ENCODE measurements at regions of chr2 and their contacts with region 1.

Region 1: DNA sequence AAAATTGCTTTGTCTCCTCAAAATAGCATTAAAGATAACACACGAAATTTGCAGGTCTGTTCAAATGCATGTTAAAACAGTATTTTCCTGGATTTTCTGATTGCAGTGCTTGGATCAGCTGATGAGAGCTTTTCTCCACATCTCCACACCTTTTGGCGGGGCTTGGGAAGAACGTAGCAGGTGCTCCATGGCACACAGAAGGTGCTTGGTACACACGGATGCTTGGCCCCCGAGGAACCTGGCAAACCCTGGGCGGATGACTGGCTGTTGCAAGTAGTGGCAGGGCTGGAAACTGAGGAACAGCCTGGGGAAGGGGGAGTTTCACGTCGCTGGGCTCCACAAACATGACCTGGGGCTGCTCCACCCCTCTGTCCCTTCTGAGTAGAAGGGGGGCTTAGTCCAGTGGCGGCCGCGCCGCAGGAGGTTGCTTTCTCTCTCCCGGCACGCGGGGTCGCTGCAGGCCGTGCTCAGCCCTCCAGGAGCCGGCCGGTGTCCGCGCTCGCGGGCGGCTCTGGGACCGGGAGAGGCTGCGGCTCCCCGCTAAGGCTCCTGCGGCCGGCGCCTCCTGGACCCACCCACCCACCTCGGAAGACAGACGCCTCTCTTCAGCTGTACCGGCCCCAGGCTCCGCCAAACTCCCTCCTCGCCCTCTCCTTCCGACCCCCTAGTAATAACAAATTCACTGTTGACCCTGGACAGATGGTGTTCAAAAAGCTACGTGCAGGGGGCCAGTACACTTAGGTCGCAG is 69.3 kb downstream of the MARCO start:
- DNase-seq: peak; percentile 39
- H3K4me3 ChIP-seq: no peak overlapping the region
- H3K27ac ChIP-seq: no peak overlapping the region
- H3K4me1 ChIP-seq: peaks cover 0 to 4% (median 1%) of the 10 kb centered on the region in 4 donors
- H3K27me3 ChIP-seq: peaks cover 48% of the 10 kb centered on the region
- CTCF ChIP-seq: peak; percentile 26 to 49 (median 40)
- EP300 ChIP-seq: no peak
- POLR2A ChIP-seq: no peak

Region 2: GRCh38 chr2:119290859-119291587 is 279.7 kb after region 1 on chr2:
- in situ Hi-C with region 1: loop called in 1 of 4 experiments (anchors 25 kb)
- intact Hi-C with region 1: no loop called
- DNase-seq: peak; percentile 86
- H3K4me3 ChIP-seq: no peak overlapping the region
- H3K27ac ChIP-seq: no peak overlapping the region
- H3K4me1 ChIP-seq: peaks cover 0 to 10% (median 0%) of the 10 kb centered on the region in 4 donors
- H3K27me3 ChIP-seq: no peaks in the 10 kb centered on the region
- CTCF ChIP-seq: peak; percentile 52 to 72 (median 59)
- EP300 ChIP-seq: no peak
- POLR2A ChIP-seq: no peak

Measured in transverse colon (tissue), 4 donors.